Dendritic cell treated with granulocyte-macrophage colony-stimulating factor and Interleukin-4, amounts not matched to agents 40 ng/mL and 50 ng/mL, for 4 days (primary cell): ENCODE measurements at regions of chr11 and their contacts with region 1.

Region 1: DNA sequence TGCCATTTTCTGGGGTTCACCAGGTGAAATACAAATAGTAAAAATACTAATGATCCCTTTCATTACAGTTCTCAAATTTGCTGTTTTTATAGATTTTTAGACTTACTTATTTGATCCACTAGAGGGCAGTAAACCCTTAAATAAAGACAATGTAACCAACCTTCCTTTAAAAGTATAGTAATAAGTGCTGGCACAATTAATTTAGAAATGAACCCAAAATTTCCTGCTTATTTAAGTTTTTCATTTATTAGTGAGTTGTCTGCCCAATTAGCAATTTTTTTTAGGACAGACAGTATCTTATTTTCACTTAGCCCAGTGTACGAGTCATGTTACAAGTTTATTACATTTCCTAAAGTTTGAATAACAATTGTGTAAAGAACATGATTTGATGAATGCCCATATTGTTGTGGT is 4.7 kb downstream of the DDIAS start:
- H3K4me3 Mint-ChIP-seq: no peak overlapping the region
- H3K27ac Mint-ChIP-seq: no peak overlapping the region
- H3K4me1 Mint-ChIP-seq: peaks cover 30% of the 10 kb centered on the region
- H3K27me3 Mint-ChIP-seq: no peaks in the 10 kb centered on the region

Region 2: DNA sequence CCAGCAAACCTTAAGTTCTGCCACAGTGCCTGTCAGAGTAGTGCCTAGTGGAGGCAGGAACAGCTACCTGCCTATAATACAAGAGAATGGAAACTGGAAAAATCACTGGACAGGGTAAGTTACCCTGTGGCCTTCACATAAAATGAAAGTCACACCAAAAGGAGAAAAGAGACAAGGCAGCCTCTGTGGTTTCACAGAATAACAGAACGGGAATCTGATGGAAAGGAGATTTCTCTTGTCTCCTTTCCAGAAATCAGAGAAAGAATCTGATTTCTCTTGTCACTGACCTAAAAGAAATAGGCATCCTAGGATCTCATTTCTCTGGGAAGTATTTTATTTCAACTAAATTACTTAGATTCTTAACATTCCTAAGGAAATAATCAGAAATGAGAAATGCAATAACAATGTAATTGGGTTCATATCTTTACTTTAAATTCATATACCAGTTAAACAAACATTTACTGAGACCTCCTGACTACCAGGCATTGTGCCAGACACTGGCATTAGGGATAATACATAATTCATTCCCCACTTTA is 47.6 kb before region 1 on chr11:
- intact Hi-C with region 1: no loop called
- H3K4me3 Mint-ChIP-seq: no peak overlapping the region
- H3K27ac Mint-ChIP-seq: no peak overlapping the region
- H3K4me1 Mint-ChIP-seq: peaks cover 19% of the 10 kb centered on the region
- H3K27me3 Mint-ChIP-seq: no peaks in the 10 kb centered on the region

Region 3: GRCh38 chr11:82927254-82927880 is 21.1 kb after region 1 on chr11:
- intact Hi-C with region 1: loop called (anchors 2 kb)
- H3K4me3 Mint-ChIP-seq: no peak overlapping the region
- H3K27ac Mint-ChIP-seq: no peak overlapping the region
- H3K4me1 Mint-ChIP-seq: no peaks in the 10 kb centered on the region
- H3K27me3 Mint-ChIP-seq: no peaks in the 10 kb centered on the region

Region 4: DNA sequence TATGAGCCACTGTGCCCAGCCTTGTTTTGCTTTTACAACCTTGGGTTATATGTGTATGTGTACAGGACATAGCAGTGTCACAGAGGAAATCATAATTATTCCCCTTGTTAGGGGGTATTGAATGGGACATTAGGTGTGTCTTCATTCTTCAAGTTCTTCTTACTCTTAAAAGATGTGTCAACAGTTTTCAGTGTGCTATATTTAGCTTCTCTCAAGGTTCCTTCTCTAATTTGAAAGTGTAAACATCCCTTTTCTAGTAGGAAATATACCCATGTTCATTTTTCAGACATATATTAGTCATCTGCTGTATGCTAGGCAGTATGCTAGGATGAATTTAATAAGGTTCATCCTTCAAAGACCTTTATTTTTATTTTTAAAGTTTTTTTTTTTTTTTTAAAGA is 267.8 kb after region 1 on chr11:
- intact Hi-C with region 1: loop called (anchors 5 kb)
- H3K4me3 Mint-ChIP-seq: no peak overlapping the region
- H3K27ac Mint-ChIP-seq: no peak overlapping the region
- H3K4me1 Mint-ChIP-seq: peaks cover 46% of the 10 kb centered on the region
- H3K27me3 Mint-ChIP-seq: no peaks in the 10 kb centered on the region

Region 5: GRCh38 chr11:83249972-83250593 is 343.8 kb after region 1 on chr11:
- intact Hi-C with region 1: loop called (anchors 1 kb)
- H3K4me3 Mint-ChIP-seq: no peak overlapping the region
- H3K27ac Mint-ChIP-seq: no peak overlapping the region
- H3K4me1 Mint-ChIP-seq: no peaks in the 10 kb centered on the region
- H3K27me3 Mint-ChIP-seq: no peaks in the 10 kb centered on the region